ENCODE measurements at regions of chr18 and their contacts with region 1.

Region 1: GRCh38 chr18:31555971-31556747 is 35.5 kb upstream of the TTR start:
- DNase-seq: no peak
- ATAC-seq: peak; percentile 70

Region 2: DNA sequence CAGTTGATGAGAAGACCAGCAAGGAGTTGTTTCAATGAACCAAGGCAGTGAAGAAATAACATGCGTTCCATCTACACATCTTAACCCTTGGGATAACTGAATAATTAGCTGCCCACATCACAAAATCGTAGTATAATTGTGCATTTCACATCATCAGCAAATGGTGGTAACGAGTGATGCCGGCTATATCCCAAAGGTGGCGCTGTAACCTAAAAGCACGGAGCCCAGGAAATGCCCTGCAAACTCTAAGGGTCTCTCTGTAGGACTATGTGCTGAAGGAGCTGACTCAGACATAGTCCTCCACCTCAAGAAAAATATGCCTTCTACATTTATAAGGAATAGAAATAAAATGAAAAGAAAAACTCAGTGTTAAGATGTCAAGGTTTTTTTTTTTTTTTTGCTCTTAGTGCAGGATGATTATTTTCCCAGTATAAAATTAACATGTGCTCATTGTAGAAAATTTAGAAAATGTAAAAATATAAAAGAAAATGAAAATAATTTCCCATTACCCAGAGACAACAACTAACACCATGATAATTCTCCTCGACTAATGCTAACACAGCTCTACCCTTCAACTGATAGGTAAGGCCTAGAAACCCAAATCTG is 131.7 kb before region 1 on chr18:
- intact Hi-C with region 1: no loop called
- DNase-seq: no peak
- ATAC-seq: no peak

Region 3: DNA sequence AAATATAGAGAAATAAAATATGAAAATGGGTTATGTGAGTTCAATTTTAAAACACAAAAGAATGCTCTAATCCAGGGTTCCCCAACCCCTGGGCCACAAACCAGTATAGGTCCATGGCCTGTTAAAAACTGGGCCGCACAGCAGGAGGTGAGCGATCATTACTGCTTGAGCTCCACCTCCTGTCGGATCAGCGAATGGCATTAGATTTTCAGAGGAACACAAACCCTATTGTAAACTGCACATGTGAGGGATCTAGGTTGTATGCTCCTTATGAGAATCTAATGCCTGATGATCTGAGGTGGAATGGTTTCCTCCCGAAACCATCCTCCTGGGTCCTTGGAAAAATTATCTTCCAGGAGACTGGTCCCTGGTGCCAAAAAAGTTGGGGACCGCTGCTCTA is 70.2 kb after region 1 on chr18:
- intact Hi-C with region 1: loop called (anchors 2 kb)
- DNase-seq: no peak
- ATAC-seq: no peak

Region 4: GRCh38 chr18:31722369-31722957 is 166.3 kb after region 1 on chr18:
- intact Hi-C with region 1: loop called (anchors 2 kb)
- DNase-seq: peak; percentile 69
- ATAC-seq: peak; percentile 83

Region 5: DNA sequence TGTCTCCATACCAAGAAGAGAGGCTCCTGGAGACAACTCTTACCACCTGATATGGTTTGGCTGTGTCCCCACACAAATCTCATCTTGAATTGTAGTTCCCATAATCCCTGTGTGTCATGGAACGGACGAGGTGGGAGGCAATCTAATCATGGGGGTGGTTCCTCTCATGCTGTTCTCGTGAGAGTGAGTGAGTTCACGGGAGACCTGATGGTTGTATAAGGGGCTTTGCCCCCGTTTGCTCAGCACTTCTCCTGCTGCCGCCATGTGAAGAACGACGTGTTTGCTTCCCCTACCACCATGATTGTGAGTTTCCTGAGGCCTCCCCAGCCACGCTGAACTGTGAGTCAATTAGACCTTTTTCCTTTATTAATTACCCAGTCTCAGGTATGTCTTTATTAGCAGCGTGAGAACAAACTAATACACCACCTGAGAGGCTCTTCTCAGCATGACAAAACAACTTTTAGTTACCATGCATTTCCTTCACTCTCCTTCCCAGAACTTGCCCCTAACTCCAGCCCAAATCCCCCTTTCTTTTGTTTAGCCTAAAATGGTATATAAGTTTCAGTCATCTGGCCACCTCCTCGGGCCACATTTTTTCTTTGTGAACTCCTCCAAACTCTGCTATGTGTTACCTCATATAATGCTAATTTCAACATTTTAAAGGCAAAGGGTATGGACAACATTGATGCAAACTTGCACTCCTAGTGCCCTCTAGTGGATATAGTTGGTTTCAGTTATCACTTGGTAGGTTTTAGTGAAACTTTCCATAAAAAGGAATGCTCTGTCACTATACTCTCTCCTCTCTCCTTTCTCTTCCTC is 263.2 kb after region 1 on chr18:
- intact Hi-C with region 1: loop called (anchors 2 kb)
- DNase-seq: no peak
- ATAC-seq: no peak

Region 6: DNA sequence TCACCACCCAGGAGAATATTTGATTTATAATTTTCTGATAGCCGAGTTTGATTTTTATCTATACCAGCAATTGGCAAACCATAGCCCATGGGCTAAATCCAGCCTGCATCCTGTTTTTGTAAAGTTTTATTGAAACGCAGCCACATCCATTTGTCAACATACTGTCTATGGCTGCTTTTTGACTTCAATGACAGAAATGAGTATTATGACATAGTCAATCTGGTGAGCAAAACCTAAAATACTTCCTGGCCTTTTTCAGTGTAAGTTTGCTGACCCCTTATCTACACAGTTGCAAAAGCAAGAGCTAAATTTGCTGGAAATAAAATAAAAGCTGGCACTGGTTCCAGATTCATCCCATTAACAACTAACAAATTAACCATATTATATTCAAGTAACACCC is 284.3 kb after region 1 on chr18:
- intact Hi-C with region 1: no loop called
- DNase-seq: no peak
- ATAC-seq: no peak

Measured in Right ventricle myocardium inferior (tissue), 1 donor.